IMR-90 (cell line): ENCODE measurements at regions of chrX and their contacts with region 1.

Region 1: DNA sequence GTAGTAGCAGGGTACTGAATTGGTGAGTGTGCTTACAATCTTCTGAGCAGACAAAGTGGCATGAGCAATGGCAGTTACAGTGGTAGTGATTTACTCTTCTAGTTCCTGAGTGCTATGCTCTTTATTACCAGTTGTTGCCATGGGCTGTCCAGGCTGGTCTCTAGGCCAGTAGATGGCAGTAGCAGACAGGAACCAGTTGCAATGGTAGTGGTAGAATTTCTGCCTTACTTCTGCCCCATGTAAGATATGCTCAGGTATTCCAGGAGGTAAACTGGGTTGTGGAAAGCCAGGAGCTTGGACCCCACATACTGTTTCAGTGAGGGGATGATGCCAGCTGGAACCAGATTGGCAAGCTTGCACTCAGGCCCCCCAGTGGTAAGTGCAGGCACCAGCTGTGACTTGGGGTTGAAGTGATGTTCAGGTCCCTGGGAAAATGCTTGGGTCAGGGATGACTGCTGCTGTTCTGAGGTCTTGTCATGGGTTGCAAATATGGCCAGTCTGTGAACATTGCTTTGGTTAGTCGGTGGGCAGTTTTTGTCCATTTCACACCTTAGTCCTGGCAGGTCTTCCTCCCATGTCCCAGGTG is 63.0 kb upstream of the ZXDB start:
- DNase-seq: peak; percentile 1
- ATAC-seq: no peak
- H3K4me3 ChIP-seq: no peak overlapping the region
- H3K27ac ChIP-seq: no peak overlapping the region
- H3K4me1 ChIP-seq: no peaks in the 10 kb centered on the region
- H3K27me3 ChIP-seq: no peaks in the 10 kb centered on the region
- CTCF ChIP-seq: 0 out of 2 replicates have a peak, but pooled peaks have one; percentile 16
- POLR2A ChIP-seq: no peak
- RAD21 ChIP-seq: no peak

Region 2: DNA sequence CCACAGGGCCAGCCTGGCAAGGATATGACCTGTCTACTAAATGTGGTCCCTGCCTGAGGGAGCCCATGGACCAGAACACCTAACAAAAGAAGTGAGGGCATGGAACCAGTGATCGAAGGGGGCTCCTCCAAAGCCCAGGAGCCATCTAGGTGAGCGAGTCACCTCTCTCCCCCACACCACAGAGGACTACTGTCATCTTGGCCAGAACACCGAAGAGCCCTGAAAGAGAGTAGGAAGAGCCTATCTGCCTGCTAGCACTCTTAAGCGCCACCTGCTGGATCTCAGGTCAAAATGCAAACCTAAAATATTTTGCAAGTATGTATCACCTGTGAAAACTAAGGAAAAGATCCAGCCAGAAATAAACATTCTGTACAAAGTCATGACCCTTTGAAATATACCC is 74.9 kb before region 1 on chrX:
- CTCF ChIA-PET with region 1: no interaction called
- POLR2A ChIA-PET with region 1: no interaction called
- dilution Hi-C with region 1: no loop called
- in situ Hi-C with region 1: no loop called
- intact Hi-C with region 1: no loop called
- DNase-seq: peak; percentile 4
- ATAC-seq: no peak
- H3K4me3 ChIP-seq: no peak overlapping the region
- H3K27ac ChIP-seq: no peak overlapping the region
- H3K4me1 ChIP-seq: no peaks in the 10 kb centered on the region
- H3K27me3 ChIP-seq: no peaks in the 10 kb centered on the region
- CTCF ChIP-seq: peak; percentile 37
- POLR2A ChIP-seq: no peak
- RAD21 ChIP-seq: no peak

Region 3: GRCh38 chrX:57573754-57574153 is 45.0 kb after region 1 on chrX:
- CTCF ChIA-PET with region 1: no interaction called
- POLR2A ChIA-PET with region 1: no interaction called
- dilution Hi-C with region 1: no loop called
- in situ Hi-C with region 1: no loop called
- intact Hi-C with region 1: loop called (anchors 1 kb)
- DNase-seq: peak; percentile 17
- ATAC-seq: peak; percentile 56; the same call in 1 of the 2 replicates
- H3K4me3 ChIP-seq: no peak overlapping the region
- H3K27ac ChIP-seq: no peak overlapping the region
- H3K4me1 ChIP-seq: no peaks in the 10 kb centered on the region
- H3K27me3 ChIP-seq: no peaks in the 10 kb centered on the region; the same call in 1 of the 2 replicates
- CTCF ChIP-seq: peak; percentile 54
- POLR2A ChIP-seq: no peak
- RAD21 ChIP-seq: peak; percentile 56